Heart left ventricle (tissue), 16 donors: ENCODE measurements at regions of chr6 and their contacts with region 1.

Region 1: DNA sequence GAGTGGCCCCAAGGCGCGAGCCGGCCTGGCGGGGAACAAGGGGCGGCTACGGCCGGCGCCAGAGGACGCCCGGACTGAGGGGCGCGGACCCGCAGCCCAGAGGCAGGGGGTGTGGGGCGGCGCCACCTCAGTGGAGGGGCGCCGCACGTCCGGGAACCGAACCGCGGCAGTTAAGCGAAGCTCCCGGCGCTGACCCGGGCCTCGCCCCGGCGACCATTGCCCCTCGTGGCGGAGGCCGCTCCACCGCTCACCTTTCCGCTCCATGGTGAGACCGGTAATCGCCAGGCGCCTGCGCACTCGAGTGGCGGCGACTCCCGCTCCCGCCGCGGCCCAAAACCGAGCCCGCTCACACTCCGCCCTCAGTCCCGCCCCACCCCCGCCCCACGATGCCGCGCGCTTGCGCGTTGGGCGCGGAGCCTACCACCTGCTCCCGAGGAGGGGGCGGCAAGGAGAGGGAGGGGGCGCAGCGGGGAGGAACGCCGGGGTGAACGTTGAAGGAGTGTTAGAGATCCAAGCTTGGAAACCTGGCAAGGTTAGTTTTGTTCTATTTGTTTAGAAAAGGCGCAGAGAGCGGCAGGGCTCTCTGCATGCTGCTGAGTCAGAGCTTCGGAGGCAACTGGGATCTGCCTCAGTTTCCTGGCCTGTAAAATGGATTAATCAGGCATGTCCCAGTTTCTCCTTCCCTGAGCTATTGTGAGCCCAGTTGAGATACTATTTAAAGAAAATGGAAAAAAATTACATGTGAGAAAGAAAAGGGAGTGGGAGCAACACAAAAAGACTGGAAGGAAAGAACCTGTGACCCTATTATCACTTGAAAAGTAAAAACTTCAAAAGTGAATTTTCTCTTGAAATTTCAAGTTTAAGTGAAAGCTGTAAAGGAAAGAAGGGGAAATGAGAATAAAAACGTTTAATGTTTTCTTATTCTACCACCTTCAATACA is at the start of gene SRPK1:
- DNase-seq: peak; percentile 87 to 94 (median 91)
- ATAC-seq: peak; percentile 90 to 98 (median 98)
- H3K4me3 ChIP-seq: peak within 1 kb of the TSS; percentile 75 to 98 (median 90)
- H3K27ac ChIP-seq: peak within 1 kb of the TSS; percentile 34 to 82 (median 73)
- H3K4me1 ChIP-seq: peaks cover 0 to 36% (median 14%) of the 10 kb centered on the region in 12 donors
- H3K27me3 ChIP-seq: no peaks in the 10 kb centered on the region
- CTCF ChIP-seq: no peak
- POLR2A ChIP-seq: peak in 1 of 2 donors; percentile 71
- total RNA-seq, gene SRPK1: 17.7 to 41.7 (median 19.9) TPM

Region 2: GRCh38 chr6:36027501-36028087 is 106.5 kb after region 1 on chr6 and contains the start of gene MAPK14:
- intact Hi-C with region 1: loop called in 1 of 10 experiments (anchors 5 kb)
- DNase-seq: peak; percentile 99 to 100 (median 99)
- ATAC-seq: peak; percentile 94 to 98 (median 97)
- H3K4me3 ChIP-seq: peak within 1 kb of the TSS; percentile 69 to 100 (median 92)
- H3K27ac ChIP-seq: peak within 1 kb of the TSS; percentile 83 to 96 (median 92)
- H3K4me1 ChIP-seq: peaks cover 0 to 46% (median 20%) of the 10 kb centered on the region in 12 donors
- H3K27me3 ChIP-seq: peaks cover 4 to 16% (median 7%) of the 10 kb centered on the region in 9 donors
- CTCF ChIP-seq: peak; percentile 85 to 97 (median 90)
- POLR2A ChIP-seq: peak; percentile 78 to 99
- total RNA-seq, gene MAPK14: 24.3 to 46.5 (median 34.9) TPM

Region 3: GRCh38 chr6:36099872-36100483 is 178.9 kb after region 1 on chr6:
- intact Hi-C with region 1: loop called in 1 of 10 experiments (anchors 10 kb)
- DNase-seq: no peak
- ATAC-seq: peak in 3 of 4 donors; percentile 13 to 32 (median 25)
- H3K4me3 ChIP-seq: no peak overlapping the region
- H3K27ac ChIP-seq: peak overlapping the region in 1 of 12 donors; percentile 69
- H3K4me1 ChIP-seq: peaks cover 0 to 33% (median 15%) of the 10 kb centered on the region in 12 donors
- H3K27me3 ChIP-seq: no peaks in the 10 kb centered on the region
- CTCF ChIP-seq: no peak
- POLR2A ChIP-seq: no peak